Mammary epithelial cell (primary cell): ENCODE measurements at regions of chr10 and their contacts with region 1.

Region 1: DNA sequence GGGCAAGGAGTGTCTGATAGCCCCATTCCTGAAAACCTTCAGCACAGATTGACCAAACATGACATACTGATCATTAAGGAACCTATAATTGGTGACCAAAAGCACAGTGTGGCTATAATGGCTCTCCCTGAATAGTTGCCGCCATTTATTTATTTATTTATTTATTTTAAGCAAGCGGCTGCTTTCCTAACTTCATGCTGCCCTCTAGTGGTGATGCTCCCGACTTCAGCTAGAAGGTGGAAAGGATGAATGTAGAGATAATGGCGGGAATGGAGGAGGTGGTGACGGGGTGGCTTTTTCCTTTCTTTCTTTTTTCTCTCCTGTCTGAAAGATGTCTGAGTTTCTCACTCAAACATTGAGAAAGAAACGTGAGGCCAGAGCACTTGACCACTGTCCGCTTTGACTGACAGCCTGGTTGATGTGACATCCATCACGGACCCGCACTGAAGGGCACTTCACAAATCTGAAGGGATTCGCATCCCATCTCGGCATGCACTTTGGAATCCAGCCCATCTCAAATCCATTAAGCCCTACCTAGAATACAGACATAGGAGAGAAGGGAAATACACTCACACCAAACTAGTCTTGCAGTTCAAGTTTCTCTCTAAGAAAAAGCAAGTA is 1090.1 kb downstream of the KCNMA1 start:
- DNase-seq: peak; percentile 60
- H3K4me3 ChIP-seq: no peak overlapping the region
- H3K27ac ChIP-seq: no peak overlapping the region
- H3K4me1 ChIP-seq: peaks cover 11% of the 10 kb centered on the region
- H3K27me3 ChIP-seq: no peaks in the 10 kb centered on the region
- CTCF ChIP-seq: peak; percentile 76 to 77

Region 2: DNA sequence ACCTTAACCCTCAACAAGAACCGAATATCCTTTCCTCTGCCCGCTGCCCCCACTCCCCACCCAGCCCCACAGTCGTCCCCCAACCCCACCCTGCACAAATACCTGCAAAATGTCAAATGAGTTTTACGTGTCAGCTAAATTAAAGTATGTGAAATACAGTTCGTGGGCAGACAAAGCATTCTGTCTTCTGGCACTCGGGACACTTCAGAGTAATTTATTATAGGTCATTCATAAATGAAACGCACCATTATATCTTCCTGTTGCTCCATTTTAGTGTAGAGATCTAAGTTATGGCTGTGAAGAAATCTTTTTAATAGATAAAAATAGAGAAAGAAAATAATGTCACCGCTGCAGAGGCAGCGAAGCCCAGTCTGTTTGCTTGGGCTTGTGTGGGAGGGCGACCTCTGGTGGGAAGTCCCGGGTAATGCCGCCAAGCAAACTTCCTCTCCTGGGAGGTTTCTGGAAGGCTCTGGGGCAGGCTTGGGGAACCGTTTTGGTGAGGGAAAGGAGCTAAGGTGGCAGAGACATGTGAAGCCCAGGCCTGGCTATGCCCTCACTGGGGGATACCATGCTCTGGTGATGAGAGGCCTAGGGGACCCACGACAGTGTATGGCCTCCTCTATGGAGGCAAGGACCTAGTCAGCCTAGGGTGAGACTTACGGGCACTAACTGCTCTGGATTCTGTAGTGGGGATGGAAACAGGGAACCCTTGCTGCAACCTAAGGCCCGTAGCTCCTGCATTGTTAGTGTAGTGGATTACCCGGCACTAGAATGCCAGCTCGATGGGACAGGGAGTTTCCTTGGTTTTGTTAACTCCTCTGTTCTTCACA is 511.1 kb before region 1 on chr10:
- CTCF ChIA-PET with region 1: interaction called, 4 read pairs
- dilution Hi-C with region 1: no loop called
- in situ Hi-C with region 1: no loop called
- intact Hi-C with region 1: loop called (anchors 2 kb)
- DNase-seq: peak; percentile 45
- H3K4me3 ChIP-seq: no peak overlapping the region
- H3K27ac ChIP-seq: no peak overlapping the region
- H3K4me1 ChIP-seq: peaks cover 4% of the 10 kb centered on the region
- H3K27me3 ChIP-seq: no peaks in the 10 kb centered on the region
- CTCF ChIP-seq: peak; percentile 86 to 91

Region 3: DNA sequence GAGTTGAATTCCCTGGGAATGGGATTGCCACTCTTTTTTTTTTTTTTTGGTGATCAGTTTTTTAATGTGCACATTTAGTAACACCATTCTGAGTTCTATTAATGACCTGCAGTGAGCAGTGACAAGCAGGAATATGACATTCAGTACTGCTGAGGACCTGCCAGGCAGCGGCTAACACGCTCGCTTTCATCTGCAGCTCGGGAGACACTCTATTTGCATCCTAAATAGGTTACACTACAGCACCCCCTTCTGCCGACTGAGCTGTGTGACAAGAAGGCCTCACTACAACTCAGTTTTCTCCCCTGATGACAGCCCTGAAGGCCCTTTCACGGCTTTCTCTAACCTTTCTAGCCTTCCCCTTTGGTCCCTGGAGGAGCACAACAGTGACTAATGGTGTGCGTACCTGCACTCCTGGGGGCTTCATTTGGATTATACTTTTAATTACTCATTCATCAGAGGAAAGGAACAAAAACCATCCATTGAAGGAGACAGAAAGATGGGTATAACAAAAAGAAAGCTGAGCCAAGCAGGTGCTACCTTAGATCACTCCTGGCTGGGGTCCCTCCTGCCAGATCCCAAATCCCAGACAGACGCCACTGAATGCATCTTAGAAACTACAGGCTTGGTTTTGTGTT is 243.7 kb before region 1 on chr10:
- CTCF ChIA-PET with region 1: no interaction called
- dilution Hi-C with region 1: no loop called
- in situ Hi-C with region 1: loop called in 1 of 2 experiments (anchors 25 kb)
- intact Hi-C with region 1: loop called (anchors 2 kb)
- DNase-seq: peak; percentile 51
- H3K4me3 ChIP-seq: no peak overlapping the region
- H3K27ac ChIP-seq: no peak overlapping the region
- H3K4me1 ChIP-seq: no peaks in the 10 kb centered on the region
- H3K27me3 ChIP-seq: no peaks in the 10 kb centered on the region
- CTCF ChIP-seq: peak; percentile 69 to 78

Region 4: DNA sequence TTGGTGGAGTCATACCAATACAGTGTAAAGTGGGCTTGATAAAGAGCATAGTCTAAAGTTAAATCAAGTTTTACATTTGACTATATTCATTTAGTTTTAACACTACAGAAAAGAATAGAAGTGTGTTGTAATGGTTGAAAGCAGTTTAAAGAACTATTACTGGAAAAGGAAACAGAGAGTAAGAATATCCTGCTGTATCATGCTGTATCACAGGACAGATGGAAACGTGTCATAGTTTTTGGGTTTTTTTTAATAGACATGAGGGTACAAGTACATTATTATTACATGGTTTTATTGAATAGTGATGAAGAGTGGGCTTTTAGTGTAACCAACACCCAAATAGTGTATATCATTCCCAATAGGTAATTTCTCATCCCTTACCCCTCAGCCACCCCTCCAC is 171.7 kb before region 1 on chr10:
- CTCF ChIA-PET with region 1: no interaction called
- dilution Hi-C with region 1: no loop called
- in situ Hi-C with region 1: no loop called
- intact Hi-C with region 1: loop called (anchors 10 kb)
- DNase-seq: no peak
- H3K4me3 ChIP-seq: no peak overlapping the region
- H3K27ac ChIP-seq: no peak overlapping the region
- H3K4me1 ChIP-seq: peaks cover 11% of the 10 kb centered on the region
- H3K27me3 ChIP-seq: no peaks in the 10 kb centered on the region
- CTCF ChIP-seq: no peak

Region 5: GRCh38 chr10:76667408-76668370 is 120.2 kb after region 1 on chr10:
- CTCF ChIA-PET with region 1: no interaction called
- dilution Hi-C with region 1: no loop called
- in situ Hi-C with region 1: no loop called
- intact Hi-C with region 1: no loop called
- DNase-seq: no peak
- H3K4me3 ChIP-seq: no peak overlapping the region
- H3K27ac ChIP-seq: no peak overlapping the region
- H3K4me1 ChIP-seq: no peaks in the 10 kb centered on the region
- H3K27me3 ChIP-seq: no peaks in the 10 kb centered on the region
- CTCF ChIP-seq: no peak

Region 6: GRCh38 chr10:77111611-77112550 is 564.4 kb after region 1 on chr10:
- CTCF ChIA-PET with region 1: no interaction called
- dilution Hi-C with region 1: no loop called
- in situ Hi-C with region 1: no loop called
- intact Hi-C with region 1: loop called (anchors 5 kb)
- DNase-seq: peak; percentile 66
- H3K4me3 ChIP-seq: no peak overlapping the region
- H3K27ac ChIP-seq: no peak overlapping the region
- H3K4me1 ChIP-seq: peaks cover 9% of the 10 kb centered on the region
- H3K27me3 ChIP-seq: no peaks in the 10 kb centered on the region
- CTCF ChIP-seq: peak; percentile 76 to 77